Naive thymus-derived CD8-positive, alpha-beta T cell (primary cell): ENCODE measurements at regions of chr7 and their contacts with region 1.

Region 1: GRCh38 chr7:150567169-150567568 is at the start of gene GIMAP4:
- DNase-seq: peak in 2 of 10 donors; percentile 36 to 47
- ATAC-seq: peak; percentile 37 to 49
- H3K4me3 Mint-ChIP-seq: peak within 1 kb of the TSS; percentile 83 to 100 (median 99)
- H3K27ac Mint-ChIP-seq: peak within 1 kb of the TSS; percentile 95 to 99 (median 97)
- H3K4me1 Mint-ChIP-seq: peaks cover 35 to 87% (median 79%) of the 10 kb centered on the region in 4 donors
- H3K27me3 Mint-ChIP-seq: no peaks in the 10 kb centered on the region
- polyA plus RNA-seq, gene GIMAP4: 233 to 526 (median 341) TPM

Region 2: DNA sequence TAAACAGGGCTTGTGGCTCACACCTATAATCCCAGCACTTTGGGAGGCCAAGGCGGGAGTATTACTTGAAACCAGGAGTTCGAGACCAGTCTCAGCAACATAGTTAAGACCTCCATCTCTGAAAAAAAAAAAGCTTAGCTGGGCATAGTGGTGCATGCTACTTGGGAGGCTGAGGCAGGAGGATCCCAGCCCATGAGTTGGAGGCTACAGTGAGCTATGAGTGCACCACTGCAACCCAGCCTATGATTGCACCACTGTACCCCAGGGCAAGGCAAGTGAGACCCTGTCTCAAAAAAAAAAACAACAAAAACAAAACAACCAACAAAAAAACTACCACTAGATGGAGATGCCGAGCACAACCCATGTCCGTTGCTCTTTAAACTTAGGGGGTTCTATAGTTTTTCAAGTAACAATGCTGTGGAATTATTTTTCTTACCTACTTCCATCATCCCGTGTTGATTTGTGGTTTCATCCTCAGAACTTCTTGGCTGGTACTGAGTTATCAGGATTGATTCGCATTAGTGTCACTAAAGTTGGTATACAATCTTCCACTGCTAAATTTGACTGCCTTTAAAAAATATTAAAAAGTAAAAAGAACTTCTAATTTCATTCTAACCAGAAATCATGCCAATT is 210.8 kb before region 1 on chr7:
- POLR2A ChIA-PET with region 1: no interaction called
- DNase-seq: peak in 3 of 10 donors; percentile 62 to 64 (median 63)
- ATAC-seq: peak in 1 of 2 donors; percentile 19
- H3K4me3 Mint-ChIP-seq: peak overlapping the region in 5 of 10 donors; percentile 8 to 34 (median 18)
- H3K27ac Mint-ChIP-seq: peak overlapping the region in 9 of 10 donors; percentile 4 to 79 (median 63)
- H3K4me1 Mint-ChIP-seq: peaks cover 21 to 40% (median 35%) of the 10 kb centered on the region in 4 donors
- H3K27me3 Mint-ChIP-seq: no peaks in the 10 kb centered on the region

Region 3: GRCh38 chr7:150448789-150449147 is 118.4 kb before region 1 on chr7:
- POLR2A ChIA-PET with region 1: interaction called, 433 read pairs
- DNase-seq: peak; percentile 71 to 93 (median 86)
- ATAC-seq: peak; percentile 22 to 44
- H3K4me3 Mint-ChIP-seq: peak overlapping the region; percentile 95 to 100 (median 99)
- H3K27ac Mint-ChIP-seq: peak overlapping the region; percentile 91 to 99 (median 97)
- H3K4me1 Mint-ChIP-seq: peaks cover 42 to 67% (median 52%) of the 10 kb centered on the region in 4 donors
- H3K27me3 Mint-ChIP-seq: no peaks in the 10 kb centered on the region

Region 4: GRCh38 chr7:150520145-150520544 is 47.0 kb before region 1 on chr7:
- POLR2A ChIA-PET with region 1: interaction called, 550 read pairs
- DNase-seq: peak in 4 of 10 donors; percentile 27 to 70 (median 36)
- ATAC-seq: peak; percentile 19 to 26
- H3K4me3 Mint-ChIP-seq: peak overlapping the region; percentile 91 to 100 (median 99)
- H3K27ac Mint-ChIP-seq: peak overlapping the region; percentile 87 to 99 (median 94)
- H3K4me1 Mint-ChIP-seq: peaks cover 16 to 43% (median 35%) of the 10 kb centered on the region in 4 donors
- H3K27me3 Mint-ChIP-seq: no peaks in the 10 kb centered on the region

Region 5: DNA sequence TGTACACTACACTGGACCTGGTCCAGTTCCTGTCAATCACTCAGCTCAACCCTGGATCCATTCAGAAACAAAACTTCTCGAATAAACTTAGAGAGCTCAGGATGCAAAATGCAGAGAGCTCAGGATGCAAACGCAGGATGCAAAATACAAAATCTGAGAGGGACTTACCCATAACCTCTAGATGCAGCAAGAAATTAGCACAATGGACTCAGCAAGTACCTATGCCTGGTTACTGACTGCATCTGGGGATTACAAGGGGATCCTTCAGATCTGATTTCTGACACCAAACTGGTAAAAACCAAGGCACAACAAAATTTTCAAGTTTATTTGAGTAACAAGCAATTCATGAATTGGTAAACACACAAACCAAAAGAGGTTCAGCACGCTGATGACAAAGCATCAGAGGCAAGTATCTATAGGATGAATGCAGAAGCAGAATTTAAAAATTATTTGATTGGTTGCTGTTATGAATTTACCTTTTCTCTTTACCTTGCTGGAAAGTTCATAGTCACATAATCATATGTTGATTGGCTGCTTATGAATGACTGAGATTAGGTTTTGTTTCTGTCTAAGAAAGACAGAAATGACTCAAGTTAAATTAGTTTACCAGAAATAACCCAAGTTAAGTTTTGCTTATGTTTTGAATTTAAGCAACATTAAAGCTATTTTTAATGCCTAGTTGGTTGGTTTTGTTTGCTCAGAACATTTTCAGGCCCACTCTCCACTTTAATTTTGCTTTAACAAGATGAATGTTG is 53.6 kb after region 1 on chr7:
- POLR2A ChIA-PET with region 1: interaction called, 385 read pairs
- DNase-seq: no peak
- ATAC-seq: peak; percentile 39 to 49
- H3K4me3 Mint-ChIP-seq: peak overlapping the region in 7 of 10 donors; percentile 16 to 56 (median 52)
- H3K27ac Mint-ChIP-seq: peak overlapping the region; percentile 42 to 90 (median 86)
- H3K4me1 Mint-ChIP-seq: peaks cover 21 to 70% (median 56%) of the 10 kb centered on the region in 4 donors
- H3K27me3 Mint-ChIP-seq: no peaks in the 10 kb centered on the region

Region 6: DNA sequence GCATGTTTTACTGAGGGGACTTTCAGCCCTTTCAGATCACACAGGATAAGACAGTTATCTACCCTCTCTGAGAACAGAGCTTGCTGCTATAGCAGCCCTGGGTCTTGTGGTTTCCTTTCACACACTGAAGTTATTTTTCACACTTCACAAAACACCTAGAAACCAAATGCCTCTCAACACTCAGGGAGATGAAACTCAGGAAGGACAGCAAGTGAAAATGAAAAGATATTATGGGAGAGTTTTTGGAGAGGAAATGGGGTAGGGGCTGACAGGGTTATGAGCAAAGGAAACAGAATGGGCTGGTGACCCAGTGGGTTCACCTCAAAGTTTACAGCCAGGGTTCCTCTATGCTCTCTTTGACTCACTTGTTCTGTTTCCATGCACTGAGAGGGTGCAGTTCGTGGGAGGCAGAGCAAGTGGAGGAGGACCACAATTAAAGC is 101.3 kb after region 1 on chr7:
- POLR2A ChIA-PET with region 1: interaction called, 45 read pairs
- DNase-seq: peak in 9 of 10 donors; percentile 41 to 86 (median 71)
- ATAC-seq: peak; percentile 79 to 92
- H3K4me3 Mint-ChIP-seq: peak overlapping the region; percentile 60 to 85 (median 78)
- H3K27ac Mint-ChIP-seq: peak overlapping the region; percentile 94 to 100 (median 98)
- H3K4me1 Mint-ChIP-seq: peaks cover 34 to 93% (median 89%) of the 10 kb centered on the region in 4 donors
- H3K27me3 Mint-ChIP-seq: no peaks in the 10 kb centered on the region

Region 7: GRCh38 chr7:150716368-150716767 is 149.2 kb after region 1 on chr7 and contains the start of gene GIMAP1:
- POLR2A ChIA-PET with region 1: interaction called, 227 read pairs
- DNase-seq: peak; percentile 39 to 85 (median 68)
- ATAC-seq: peak; percentile 81 to 91
- H3K4me3 Mint-ChIP-seq: peak within 1 kb of the TSS; percentile 92 to 100 (median 97)
- H3K27ac Mint-ChIP-seq: peak within 1 kb of the TSS; percentile 89 to 99 (median 98)
- H3K4me1 Mint-ChIP-seq: peaks cover 40 to 69% (median 66%) of the 10 kb centered on the region in 4 donors
- H3K27me3 Mint-ChIP-seq: no peaks in the 10 kb centered on the region
- polyA plus RNA-seq, gene GIMAP1: 48.0 to 87.4 (median 67.1) TPM

Region 8: GRCh38 chr7:151008511-151009323 is 441.5 kb after region 1 on chr7:
- POLR2A ChIA-PET with region 1: no interaction called
- DNase-seq: peak; percentile 56 to 85 (median 70)
- ATAC-seq: peak; percentile 39 to 49
- H3K4me3 Mint-ChIP-seq: peak overlapping the region; percentile 72 to 89 (median 84)
- H3K27ac Mint-ChIP-seq: peak overlapping the region; percentile 84 to 97 (median 94)
- H3K4me1 Mint-ChIP-seq: peaks cover 26 to 66% (median 62%) of the 10 kb centered on the region in 4 donors
- H3K27me3 Mint-ChIP-seq: peaks cover 0 to 2% (median 0%) of the 10 kb centered on the region in 5 donors

Region 9: DNA sequence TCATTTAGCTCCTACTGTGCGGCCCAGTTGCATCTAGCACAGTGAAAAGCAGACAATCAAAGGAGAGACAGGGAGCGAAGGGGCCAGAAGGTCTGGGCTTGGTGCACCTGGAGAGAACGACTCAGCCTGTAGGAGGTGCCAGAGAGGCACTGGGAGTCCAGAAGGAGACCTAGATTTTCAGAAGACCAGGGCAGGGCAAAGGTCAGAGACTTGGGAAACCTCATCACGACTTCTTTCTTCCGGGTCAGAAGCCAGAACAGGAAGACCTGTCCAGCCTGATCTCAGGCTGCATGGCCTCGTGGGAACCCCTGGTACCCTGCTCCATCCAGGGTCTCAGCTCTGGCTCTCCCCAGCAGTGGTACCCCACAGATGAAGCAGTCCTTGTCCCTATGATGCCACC is 524.3 kb after region 1 on chr7:
- POLR2A ChIA-PET with region 1: no interaction called
- DNase-seq: peak in 1 of 10 donors; percentile 19
- ATAC-seq: no peak
- H3K4me3 Mint-ChIP-seq: no peak overlapping the region
- H3K27ac Mint-ChIP-seq: peak overlapping the region in 1 of 10 donors; percentile 41
- H3K4me1 Mint-ChIP-seq: peaks cover 12 to 21% (median 15%) of the 10 kb centered on the region in 4 donors
- H3K27me3 Mint-ChIP-seq: peaks cover 0 to 20% (median 4%) of the 10 kb centered on the region in 5 donors